SK-N-SH (cell line): ENCODE measurements at regions of chr5 and their contacts with region 1.

Region 1: DNA sequence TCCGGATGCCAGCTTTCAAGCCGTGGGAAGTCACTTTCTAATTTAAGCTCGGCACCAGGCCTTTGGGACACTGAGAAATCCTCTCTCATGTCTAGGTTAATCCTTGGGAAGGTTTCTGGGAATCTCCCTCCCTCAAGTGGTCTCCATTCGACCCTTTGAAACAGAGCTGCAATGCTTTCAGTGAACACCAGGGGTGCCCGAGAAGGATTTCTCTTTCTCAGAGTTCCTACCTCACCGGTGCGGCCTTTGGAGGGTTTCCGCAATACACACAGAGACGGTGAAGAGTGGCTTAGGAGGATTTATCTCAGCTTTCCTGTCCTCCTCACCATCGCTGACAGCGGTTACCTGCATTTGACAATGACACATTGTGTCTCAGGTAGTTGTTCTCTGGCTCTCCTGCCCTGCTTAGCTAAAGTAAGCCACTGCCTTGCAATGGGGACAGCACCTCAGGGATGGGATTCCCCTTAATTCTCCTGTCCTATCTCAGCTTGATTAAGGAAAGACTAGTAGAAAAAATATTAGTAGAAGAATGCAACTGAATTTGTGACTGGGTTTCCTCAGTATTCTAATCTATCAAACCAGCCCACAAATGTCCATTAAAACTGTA is 180.6 kb downstream of the GABRG2 start:
- DNase-seq: peak; percentile 29
- H3K4me3 ChIP-seq: no peak overlapping the region
- H3K27ac ChIP-seq: no peak overlapping the region
- H3K4me1 ChIP-seq: no peaks in the 10 kb centered on the region
- H3K27me3 ChIP-seq: no peaks in the 10 kb centered on the region
- CTCF ChIP-seq: peak; percentile 49
- EP300 ChIP-seq: no peak
- RAD21 ChIP-seq: peak; percentile 20; the same call in 1 of the 2 replicates

Region 2: DNA sequence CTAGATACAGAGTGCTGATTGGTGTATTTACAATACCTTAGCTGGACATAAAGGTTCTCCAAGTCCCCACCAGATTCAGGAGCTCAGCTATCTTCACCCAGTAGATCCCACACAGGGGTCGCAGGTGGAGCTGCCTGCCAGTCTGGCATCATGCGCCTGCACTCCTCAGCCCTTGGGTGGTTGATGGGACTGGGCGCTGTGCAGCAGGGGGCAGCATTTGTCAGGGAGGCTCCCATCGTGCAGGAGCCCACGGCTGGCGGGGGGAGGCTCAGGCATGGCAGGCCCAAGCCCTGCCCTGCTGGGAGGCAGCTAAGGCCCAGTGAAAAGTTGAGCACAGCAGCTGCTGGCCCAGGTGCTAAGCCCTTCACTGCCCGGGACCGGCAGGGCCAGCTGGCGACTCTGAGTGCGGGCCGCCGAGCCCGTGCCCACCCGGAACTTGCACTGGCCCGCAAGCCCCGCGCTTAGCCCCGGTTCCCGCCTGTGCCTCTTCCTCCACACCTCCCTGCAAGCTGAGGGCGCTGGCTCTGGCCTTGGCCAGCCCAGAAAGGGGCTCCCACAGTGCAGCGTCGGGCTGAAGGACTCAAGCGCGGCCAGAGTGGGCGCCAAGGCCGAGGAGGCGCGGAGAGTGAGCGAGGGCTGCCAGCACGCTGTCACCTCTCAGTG is 1082.1 kb before region 1 on chr5:
- CTCF ChIA-PET with region 1: no interaction called
- POLR2A ChIA-PET with region 1: interaction called, 11 read pairs
- DNase-seq: no peak
- H3K4me3 ChIP-seq: no peak overlapping the region
- H3K27ac ChIP-seq: no peak overlapping the region
- H3K4me1 ChIP-seq: no peaks in the 10 kb centered on the region
- H3K27me3 ChIP-seq: no peaks in the 10 kb centered on the region
- CTCF ChIP-seq: no peak
- EP300 ChIP-seq: no peak
- RAD21 ChIP-seq: no peak

Region 3: DNA sequence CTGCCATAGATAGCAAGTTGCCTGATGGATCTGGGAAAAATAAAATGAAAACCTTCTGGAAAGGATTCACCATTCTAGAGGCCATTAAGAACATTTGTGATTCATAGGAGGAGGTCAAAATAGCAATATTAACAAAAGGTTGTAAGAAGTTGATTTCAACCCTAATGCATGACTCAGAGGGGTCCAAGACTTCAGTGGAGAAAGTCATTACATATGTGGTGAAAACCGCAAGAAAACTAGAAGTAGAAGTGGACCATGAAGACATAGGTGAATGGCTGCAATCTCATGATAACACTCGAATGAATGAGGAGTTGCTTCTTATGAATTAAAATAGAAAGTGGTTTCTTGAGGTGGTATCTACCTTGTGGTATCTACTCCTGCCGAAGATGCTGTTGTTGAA is 313.7 kb before region 1 on chr5:
- CTCF ChIA-PET with region 1: no interaction called
- POLR2A ChIA-PET with region 1: no interaction called
- DNase-seq: no peak
- H3K4me3 ChIP-seq: no peak overlapping the region
- H3K27ac ChIP-seq: no peak overlapping the region
- H3K4me1 ChIP-seq: no peaks in the 10 kb centered on the region
- H3K27me3 ChIP-seq: no peaks in the 10 kb centered on the region
- CTCF ChIP-seq: no peak
- EP300 ChIP-seq: no peak
- RAD21 ChIP-seq: no peak

Region 4: DNA sequence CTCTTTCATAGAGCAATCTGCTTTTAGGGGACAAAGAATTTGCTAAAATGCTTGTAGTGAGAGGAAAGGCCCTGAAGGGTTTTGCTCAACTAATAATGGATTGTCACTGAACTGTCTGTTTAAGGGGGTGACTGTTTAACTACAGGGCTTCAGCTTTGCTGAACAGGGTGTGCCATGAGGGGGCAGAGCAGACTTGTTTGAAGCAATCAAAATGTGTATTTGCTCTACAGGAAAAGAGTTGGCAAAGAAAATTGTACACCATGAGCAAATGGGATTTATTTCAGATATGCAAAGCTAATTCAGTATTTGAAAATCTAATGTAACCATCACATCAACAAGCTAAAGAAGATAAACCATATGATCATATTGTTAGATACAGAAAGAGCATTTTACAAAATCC is 26.3 kb before region 1 on chr5:
- CTCF ChIA-PET with region 1: no interaction called
- POLR2A ChIA-PET with region 1: no interaction called
- DNase-seq: no peak
- H3K4me3 ChIP-seq: no peak overlapping the region
- H3K27ac ChIP-seq: no peak overlapping the region
- H3K4me1 ChIP-seq: no peaks in the 10 kb centered on the region
- H3K27me3 ChIP-seq: no peaks in the 10 kb centered on the region
- CTCF ChIP-seq: no peak
- EP300 ChIP-seq: no peak
- RAD21 ChIP-seq: no peak

Region 5: DNA sequence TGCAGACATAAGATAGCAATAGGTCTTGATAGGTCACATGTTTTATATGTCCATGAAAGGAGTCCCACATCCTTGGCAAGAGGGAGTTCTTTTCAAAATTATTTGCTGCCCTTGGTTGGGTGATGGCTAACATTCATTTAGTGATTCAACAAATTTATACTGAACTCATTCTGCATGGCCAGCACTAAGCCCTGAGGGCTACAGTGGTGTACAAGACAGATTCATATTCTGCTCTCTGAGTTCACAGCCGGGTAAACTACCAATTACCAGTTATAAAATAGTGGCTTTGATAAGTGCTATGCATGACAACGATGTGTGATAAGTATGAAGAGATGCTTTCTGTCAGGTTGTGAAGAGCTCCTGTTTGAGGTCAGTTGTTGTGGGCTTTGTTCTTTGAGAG is 159.4 kb after region 1 on chr5:
- CTCF ChIA-PET with region 1: no interaction called
- POLR2A ChIA-PET with region 1: no interaction called
- DNase-seq: no peak
- H3K4me3 ChIP-seq: no peak overlapping the region
- H3K27ac ChIP-seq: no peak overlapping the region
- H3K4me1 ChIP-seq: no peaks in the 10 kb centered on the region; a peak in 1 of 4 replicates
- H3K27me3 ChIP-seq: no peaks in the 10 kb centered on the region
- CTCF ChIP-seq: no peak
- EP300 ChIP-seq: no peak
- RAD21 ChIP-seq: no peak

Region 6: GRCh38 chr5:162512935-162513575 is 264.8 kb after region 1 on chr5:
- CTCF ChIA-PET with region 1: no interaction called
- POLR2A ChIA-PET with region 1: no interaction called
- DNase-seq: no peak
- H3K4me3 ChIP-seq: no peak overlapping the region
- H3K27ac ChIP-seq: no peak overlapping the region
- H3K4me1 ChIP-seq: no peaks in the 10 kb centered on the region
- H3K27me3 ChIP-seq: no peaks in the 10 kb centered on the region
- CTCF ChIP-seq: no peak
- EP300 ChIP-seq: no peak
- RAD21 ChIP-seq: no peak